ENCODE measurements at regions of chr6 and their contacts with region 1.

Region 1: GRCh38 chr6:33417903-33418689 is at the start of gene CUTA:
- DNase-seq: peak; percentile 98
- H3K4me3 Mint-ChIP-seq: peak within 1 kb of the TSS; percentile 95
- H3K27ac Mint-ChIP-seq: peak within 1 kb of the TSS; percentile 96
- H3K4me1 Mint-ChIP-seq: peaks cover 70% of the 10 kb centered on the region
- H3K27me3 Mint-ChIP-seq: no peaks in the 10 kb centered on the region
- total RNA-seq, gene CUTA: 131 and 137 TPM in 2 replicates

Region 2: GRCh38 chr6:32843979-32844838 is 573.9 kb before region 1 on chr6 and contains the start of gene PSMB8:
- intact Hi-C with region 1: loop called (anchors 10 kb)
- DNase-seq: peak; percentile 96
- H3K4me3 Mint-ChIP-seq: peak within 1 kb of the TSS; percentile 93
- H3K27ac Mint-ChIP-seq: peak within 1 kb of the TSS; percentile 98
- H3K4me1 Mint-ChIP-seq: peaks cover 82% of the 10 kb centered on the region
- H3K27me3 Mint-ChIP-seq: no peaks in the 10 kb centered on the region
- total RNA-seq, gene PSMB8: 353 and 358 TPM in 2 replicates

Region 3: DNA sequence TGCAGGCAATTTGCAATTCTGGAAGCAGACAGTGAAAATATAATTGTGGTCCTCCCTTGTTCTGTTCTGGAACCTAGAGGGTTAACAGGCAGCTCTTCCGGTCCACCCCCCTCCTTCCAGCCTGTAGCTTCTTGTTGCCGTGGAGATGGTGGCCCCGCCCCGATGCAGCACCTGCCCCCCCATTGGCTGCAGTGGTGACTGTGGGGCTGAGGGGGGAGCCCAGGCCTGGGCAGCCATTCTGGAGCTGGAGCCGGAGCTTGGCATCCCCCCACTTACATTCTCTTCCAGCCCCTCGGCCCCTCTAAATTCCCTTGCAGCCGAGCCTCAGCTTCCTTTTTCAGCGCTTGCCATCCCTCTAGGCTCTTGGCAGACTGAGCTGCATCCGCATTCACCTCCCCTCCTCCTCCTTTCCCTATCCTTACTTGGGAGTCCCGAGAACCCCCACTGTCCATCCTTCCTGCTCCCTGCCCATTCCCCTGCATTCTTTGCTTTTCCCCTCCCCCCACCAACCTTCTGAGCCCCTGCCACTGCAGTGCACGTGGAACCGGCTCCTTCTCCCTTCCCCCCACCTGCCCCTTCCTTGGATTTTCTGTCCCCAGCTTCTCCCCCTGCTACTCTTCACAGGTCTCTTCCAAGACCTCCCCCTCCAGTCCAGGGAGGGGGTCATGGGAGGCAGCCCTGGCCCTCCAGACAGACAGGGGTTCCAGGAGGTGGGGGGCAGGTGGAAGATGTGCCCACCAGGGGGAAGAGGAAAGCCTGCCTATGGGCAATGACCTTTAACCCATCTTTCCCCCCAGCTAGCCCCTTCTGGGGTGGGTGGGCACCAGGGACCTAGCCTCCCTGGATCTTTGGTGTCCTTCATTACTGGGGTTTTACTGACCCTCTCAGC is 13.1 kb after region 1 on chr6:
- intact Hi-C with region 1: loop called (anchors 1 kb)
- DNase-seq: peak; percentile 75
- H3K4me3 Mint-ChIP-seq: peak overlapping the region; percentile 89
- H3K27ac Mint-ChIP-seq: peak overlapping the region; percentile 88
- H3K4me1 Mint-ChIP-seq: peaks cover 55% of the 10 kb centered on the region
- H3K27me3 Mint-ChIP-seq: no peaks in the 10 kb centered on the region